Activated T-helper 1 cell treated with anti-CD3 and anti-CD28 coated beads, Interleukin-12 subunit alpha, Interleukin-12 subunit beta, Interleukin-2, Interleukin-4 antibody, amounts not matched to agents 30 ng/mL and 10 ng/mL and 1 ng/mL, durations not matched to agents 14 hours and 24 hours and 36 hours (primary cell): ENCODE measurements at regions of chr22 and their contacts with region 1.

Region 1: GRCh38 chr22:28703436-28703835 is 23.8 kb upstream of the TTC28 start:
- DNase-seq: no peak
- H3K4me3 Mint-ChIP-seq: no peak overlapping the region
- H3K27ac Mint-ChIP-seq: no peak overlapping the region
- H3K4me1 Mint-ChIP-seq: no peaks in the 10 kb centered on the region
- H3K27me3 Mint-ChIP-seq: no peaks in the 10 kb centered on the region

Region 2: GRCh38 chr22:28570691-28571373 is 132.6 kb before region 1 on chr22:
- intact Hi-C with region 1: no loop called
- DNase-seq: no peak
- H3K4me3 Mint-ChIP-seq: no peak overlapping the region
- H3K27ac Mint-ChIP-seq: no peak overlapping the region
- H3K4me1 Mint-ChIP-seq: no peaks in the 10 kb centered on the region
- H3K27me3 Mint-ChIP-seq: peaks cover 50% of the 10 kb centered on the region

Region 3: GRCh38 chr22:28714043-28714442 is 10.6 kb after region 1 on chr22:
- intact Hi-C with region 1: loop called (anchors 2 kb)
- DNase-seq: no peak
- H3K4me3 Mint-ChIP-seq: no peak overlapping the region
- H3K27ac Mint-ChIP-seq: no peak overlapping the region
- H3K4me1 Mint-ChIP-seq: peaks cover 42% of the 10 kb centered on the region
- H3K27me3 Mint-ChIP-seq: no peaks in the 10 kb centered on the region

Region 4: GRCh38 chr22:28750471-28750881 is 47.0 kb after region 1 on chr22:
- intact Hi-C with region 1: no loop called
- DNase-seq: no peak
- H3K4me3 Mint-ChIP-seq: no peak overlapping the region
- H3K27ac Mint-ChIP-seq: no peak overlapping the region
- H3K4me1 Mint-ChIP-seq: peaks cover 10% of the 10 kb centered on the region
- H3K27me3 Mint-ChIP-seq: no peaks in the 10 kb centered on the region